ENCODE measurements at regions of chr1 and their contacts with region 1.

Region 1: DNA sequence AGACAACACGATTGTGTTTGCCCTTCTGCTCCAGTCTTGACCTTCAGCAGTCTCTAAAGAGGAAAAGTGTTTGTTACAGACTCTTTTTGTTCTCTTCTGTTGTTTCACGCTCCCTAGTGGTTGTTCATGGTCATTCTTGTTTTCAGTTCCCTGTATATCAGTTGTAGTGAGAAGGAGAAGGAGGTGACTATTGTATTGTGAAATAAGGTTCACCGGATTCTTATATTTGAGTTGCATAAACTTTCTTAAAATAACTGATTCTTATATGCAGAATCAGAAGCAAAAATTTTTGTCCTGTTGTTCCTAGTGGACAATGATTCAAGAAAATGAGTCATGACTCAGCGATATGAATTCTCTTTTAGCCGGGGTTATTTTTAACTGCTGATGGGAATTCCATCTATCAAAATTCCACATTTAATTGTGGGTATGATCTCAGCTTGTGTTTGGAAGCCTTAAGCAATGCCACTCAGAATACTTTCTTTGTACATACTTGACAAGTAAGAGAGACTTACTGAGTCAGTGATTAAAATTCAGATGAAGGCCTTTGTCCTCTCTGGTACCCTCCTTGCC is 152.2 kb downstream of the CLEC20A start:
- DNase-seq: peak; percentile 87
- H3K4me3 ChIP-seq: peak overlapping the region in 2 of 3 experiments; percentile 10 to 18
- H3K27ac ChIP-seq: peak overlapping the region; percentile 73
- H3K4me1 ChIP-seq: peaks cover 31% of the 10 kb centered on the region
- H3K27me3 ChIP-seq: no peaks in the 10 kb centered on the region
- CTCF ChIP-seq: peak; percentile 59 to 64

Region 2: DNA sequence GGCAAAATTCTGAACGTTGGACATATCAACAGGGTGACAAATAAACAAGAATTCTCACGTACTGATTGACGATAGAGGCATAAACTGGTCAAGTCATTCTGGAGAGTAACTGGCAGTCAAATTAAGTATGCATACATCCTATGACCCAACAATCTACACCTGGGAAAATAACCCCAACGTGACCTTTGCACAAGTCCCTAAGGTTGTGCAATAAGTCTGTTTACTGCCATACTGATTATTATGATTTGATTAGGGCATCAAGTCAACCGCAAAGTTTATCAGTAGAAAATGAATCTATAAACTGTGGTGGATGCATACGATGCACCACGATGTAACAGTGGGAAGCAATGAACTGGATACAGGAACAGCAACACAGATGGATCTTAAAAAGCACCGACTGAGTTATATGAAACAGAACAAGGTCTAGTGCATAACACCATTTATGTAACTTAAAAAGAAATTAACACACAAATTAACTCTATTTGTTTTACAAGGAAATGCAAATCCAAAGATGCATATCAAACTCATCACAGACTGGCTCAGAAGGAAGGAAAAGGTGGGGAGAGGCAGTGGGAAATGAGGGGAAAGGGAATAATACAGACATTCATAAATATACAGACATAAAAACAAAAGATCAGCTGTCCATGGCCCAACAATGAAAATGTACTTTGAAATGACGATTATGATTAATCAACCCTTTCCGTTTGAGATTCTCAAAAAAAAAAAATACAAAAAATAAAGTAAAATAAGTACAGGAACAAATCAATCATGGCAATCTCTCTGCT is 333.7 kb before region 1 on chr1:
- CTCF ChIA-PET with region 1: interaction called, 10 read pairs
- dilution Hi-C with region 1: no loop called
- in situ Hi-C with region 1: no loop called
- intact Hi-C with region 1: no loop called
- DNase-seq: peak; percentile 29
- H3K4me3 ChIP-seq: no peak overlapping the region
- H3K27ac ChIP-seq: no peak overlapping the region
- H3K4me1 ChIP-seq: peaks cover 19% of the 10 kb centered on the region
- H3K27me3 ChIP-seq: no peaks in the 10 kb centered on the region
- CTCF ChIP-seq: no peak

Region 3: DNA sequence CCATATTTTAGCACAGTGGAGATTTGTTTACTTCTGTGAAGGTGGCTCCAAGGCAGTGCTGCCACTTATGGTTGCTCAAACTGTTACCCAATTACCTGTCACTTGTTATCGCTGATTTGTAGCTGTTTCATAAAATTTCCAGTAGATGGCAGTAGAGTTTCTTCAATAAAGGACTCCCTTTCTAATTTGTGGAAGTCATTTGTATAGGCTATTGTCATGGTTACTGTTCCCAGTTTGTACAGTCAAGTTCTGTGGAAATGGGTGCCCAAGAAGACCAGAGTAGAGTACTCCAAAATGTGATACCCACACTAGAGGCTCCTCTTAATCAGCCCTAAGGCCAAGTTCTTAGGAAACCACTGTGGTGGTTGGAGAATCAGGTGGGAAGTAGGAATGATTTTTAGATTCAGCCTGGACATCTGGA is 33.9 kb before region 1 on chr1:
- CTCF ChIA-PET with region 1: no interaction called
- dilution Hi-C with region 1: no loop called
- in situ Hi-C with region 1: no loop called
- intact Hi-C with region 1: loop called (anchors 1 kb)
- DNase-seq: peak; percentile 74
- H3K4me3 ChIP-seq: no peak overlapping the region
- H3K27ac ChIP-seq: peak overlapping the region; percentile 51
- H3K4me1 ChIP-seq: peaks cover 3% of the 10 kb centered on the region
- H3K27me3 ChIP-seq: no peaks in the 10 kb centered on the region
- CTCF ChIP-seq: peak; percentile 66 to 74

Region 4: DNA sequence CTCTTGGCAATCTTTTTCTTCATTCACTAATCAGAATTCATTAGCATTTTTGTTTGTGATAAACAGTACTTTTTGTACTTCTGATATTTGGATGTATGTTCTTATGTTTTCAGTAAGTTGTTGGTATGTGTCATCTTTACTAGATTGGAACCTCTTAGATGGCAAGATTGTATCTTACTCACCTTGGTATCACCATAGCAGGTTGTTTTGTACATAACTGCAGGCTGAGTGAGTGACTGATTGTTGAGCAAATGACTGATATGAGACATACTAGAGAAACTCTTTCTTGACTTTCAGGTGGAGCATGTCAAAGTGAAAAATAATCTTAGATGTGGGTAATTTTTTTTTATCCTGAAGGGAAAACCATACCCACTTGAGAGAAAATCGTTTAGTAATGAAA is 21.5 kb before region 1 on chr1:
- CTCF ChIA-PET with region 1: interaction called, 3 read pairs
- dilution Hi-C with region 1: no loop called
- in situ Hi-C with region 1: no loop called
- intact Hi-C with region 1: loop called (anchors 1 kb)
- DNase-seq: peak; percentile 78
- H3K4me3 ChIP-seq: no peak overlapping the region
- H3K27ac ChIP-seq: peak overlapping the region; percentile 36
- H3K4me1 ChIP-seq: peaks cover 16% of the 10 kb centered on the region
- H3K27me3 ChIP-seq: no peaks in the 10 kb centered on the region
- CTCF ChIP-seq: no peak

Measured in mammary epithelial cell (primary cell).